CD4-positive, alpha-beta memory T cell (primary cell): ENCODE measurements at regions of chr6 and their contacts with region 1.

Region 1: GRCh38 chr6:24949020-24949569 is 13.3 kb upstream of the RIPOR2 start:
- DNase-seq: peak; percentile 70 to 86 (median 83)
- H3K4me3 ChIP-seq: peak overlapping the region; percentile 19 to 47
- H3K4me3 Mint-ChIP-seq: peak overlapping the region; percentile 57 to 90 (median 82)
- H3K27ac ChIP-seq: peak overlapping the region; percentile 51
- H3K27ac Mint-ChIP-seq: peak overlapping the region; percentile 84 to 97 (median 95)
- H3K4me1 ChIP-seq: peaks cover 79% of the 10 kb centered on the region
- H3K4me1 Mint-ChIP-seq: peaks cover 56 to 87% (median 72%) of the 10 kb centered on the region in 4 donors
- H3K27me3 ChIP-seq: no peaks in the 10 kb centered on the region
- H3K27me3 Mint-ChIP-seq: no peaks in the 10 kb centered on the region

Region 2: GRCh38 chr6:24788048-24788665 is 160.9 kb before region 1 on chr6:
- CTCF ChIA-PET with region 1: no interaction called
- POLR2A ChIA-PET with region 1: no interaction called
- intact Hi-C with region 1: no loop called
- DNase-seq: no peak
- H3K4me3 ChIP-seq: no peak overlapping the region
- H3K4me3 Mint-ChIP-seq: no peak overlapping the region
- H3K27ac ChIP-seq: no peak overlapping the region
- H3K27ac Mint-ChIP-seq: no peak overlapping the region
- H3K4me1 ChIP-seq: no peaks in the 10 kb centered on the region
- H3K4me1 Mint-ChIP-seq: no peaks in the 10 kb centered on the region
- H3K27me3 ChIP-seq: no peaks in the 10 kb centered on the region
- H3K27me3 Mint-ChIP-seq: no peaks in the 10 kb centered on the region

Region 3: GRCh38 chr6:24902782-24903181 is 46.3 kb before region 1 on chr6:
- CTCF ChIA-PET with region 1: interaction called, 4 read pairs
- POLR2A ChIA-PET with region 1: interaction called, 28 read pairs
- intact Hi-C with region 1: no loop called
- DNase-seq: no peak
- H3K4me3 ChIP-seq: no peak overlapping the region
- H3K4me3 Mint-ChIP-seq: peak overlapping the region in 6 of 8 donors; percentile 16 to 85 (median 63)
- H3K27ac ChIP-seq: no peak overlapping the region
- H3K27ac Mint-ChIP-seq: peak overlapping the region; percentile 73 to 94 (median 89)
- H3K4me1 ChIP-seq: peaks cover 99% of the 10 kb centered on the region
- H3K4me1 Mint-ChIP-seq: peaks cover 81 to 99% (median 92%) of the 10 kb centered on the region in 4 donors
- H3K27me3 ChIP-seq: no peaks in the 10 kb centered on the region
- H3K27me3 Mint-ChIP-seq: no peaks in the 10 kb centered on the region

Region 4: GRCh38 chr6:24919004-24919892 is 29.8 kb before region 1 on chr6:
- CTCF ChIA-PET with region 1: interaction called, 10 read pairs
- POLR2A ChIA-PET with region 1: interaction called, 1,351 read pairs
- intact Hi-C with region 1: no loop called
- DNase-seq: no peak
- H3K4me3 ChIP-seq: peak overlapping the region in 1 of 2 donors; percentile 29
- H3K4me3 Mint-ChIP-seq: peak overlapping the region; percentile 67 to 88 (median 85)
- H3K27ac ChIP-seq: peak overlapping the region; percentile 45
- H3K27ac Mint-ChIP-seq: peak overlapping the region; percentile 81 to 95 (median 89)
- H3K4me1 ChIP-seq: peaks cover 98% of the 10 kb centered on the region
- H3K4me1 Mint-ChIP-seq: peaks cover 72 to 97% (median 86%) of the 10 kb centered on the region in 4 donors
- H3K27me3 ChIP-seq: no peaks in the 10 kb centered on the region
- H3K27me3 Mint-ChIP-seq: no peaks in the 10 kb centered on the region

Region 5: DNA sequence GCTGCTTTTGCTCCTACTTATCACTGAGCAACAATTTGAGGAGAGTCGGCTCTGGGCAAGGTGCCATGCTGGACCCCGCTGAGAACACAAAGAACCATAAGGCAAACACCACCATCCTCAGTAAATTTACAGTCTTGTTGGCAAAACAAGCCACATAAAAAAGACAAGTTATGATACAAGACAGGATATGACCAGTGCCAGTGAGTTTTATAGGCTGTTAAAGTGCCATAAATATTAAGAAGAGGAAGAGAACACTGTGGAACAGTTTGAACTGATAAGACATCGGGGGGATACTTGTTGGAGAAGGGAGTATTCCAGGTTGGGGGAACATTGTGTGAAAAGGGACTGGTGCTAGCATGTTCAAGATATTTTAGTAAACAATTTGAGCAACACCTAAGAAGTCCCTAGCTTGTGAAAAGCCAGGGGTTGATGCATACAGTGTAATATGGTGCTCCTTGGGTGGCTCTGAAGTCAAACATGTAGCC is 11.9 kb after region 1 on chr6:
- CTCF ChIA-PET with region 1: interaction called, 12 read pairs
- POLR2A ChIA-PET with region 1: interaction called, 171 read pairs
- intact Hi-C with region 1: loop called (anchors 1 kb)
- DNase-seq: peak in 4 of 5 donors; percentile 40 to 58 (median 47)
- H3K4me3 ChIP-seq: no peak overlapping the region
- H3K4me3 Mint-ChIP-seq: peak overlapping the region; percentile 4 to 79 (median 64)
- H3K27ac ChIP-seq: peak overlapping the region; percentile 12
- H3K27ac Mint-ChIP-seq: peak overlapping the region; percentile 74 to 97 (median 91)
- H3K4me1 ChIP-seq: peaks cover 96% of the 10 kb centered on the region
- H3K4me1 Mint-ChIP-seq: peaks cover 68 to 90% (median 78%) of the 10 kb centered on the region in 4 donors
- H3K27me3 ChIP-seq: no peaks in the 10 kb centered on the region
- H3K27me3 Mint-ChIP-seq: no peaks in the 10 kb centered on the region